MCF 10A (cell line): ENCODE measurements at regions of chr17 and their contacts with region 1.

Region 1: GRCh38 chr17:13393841-13394710 is 207.7 kb downstream of the HS3ST3A1 start:
- DNase-seq: peak; percentile 95
- H3K4me3 Mint-ChIP-seq: no peak overlapping the region
- H3K27ac Mint-ChIP-seq: peak overlapping the region; percentile 65
- H3K4me1 Mint-ChIP-seq: peaks cover 27% of the 10 kb centered on the region
- H3K27me3 Mint-ChIP-seq: no peaks in the 10 kb centered on the region
- CTCF ChIP-seq: no peak

Region 2: GRCh38 chr17:13410874-13411273 is 16.8 kb after region 1 on chr17:
- CTCF ChIA-PET with region 1: interaction called, 4 read pairs
- POLR2A ChIA-PET with region 1: interaction called, 34 read pairs
- intact Hi-C with region 1: no loop called
- DNase-seq: peak; percentile 82
- H3K4me3 Mint-ChIP-seq: peak overlapping the region; percentile 31
- H3K27ac Mint-ChIP-seq: peak overlapping the region; percentile 83
- H3K4me1 Mint-ChIP-seq: peaks cover 27% of the 10 kb centered on the region
- H3K27me3 Mint-ChIP-seq: no peaks in the 10 kb centered on the region
- CTCF ChIP-seq: no peak

Region 3: DNA sequence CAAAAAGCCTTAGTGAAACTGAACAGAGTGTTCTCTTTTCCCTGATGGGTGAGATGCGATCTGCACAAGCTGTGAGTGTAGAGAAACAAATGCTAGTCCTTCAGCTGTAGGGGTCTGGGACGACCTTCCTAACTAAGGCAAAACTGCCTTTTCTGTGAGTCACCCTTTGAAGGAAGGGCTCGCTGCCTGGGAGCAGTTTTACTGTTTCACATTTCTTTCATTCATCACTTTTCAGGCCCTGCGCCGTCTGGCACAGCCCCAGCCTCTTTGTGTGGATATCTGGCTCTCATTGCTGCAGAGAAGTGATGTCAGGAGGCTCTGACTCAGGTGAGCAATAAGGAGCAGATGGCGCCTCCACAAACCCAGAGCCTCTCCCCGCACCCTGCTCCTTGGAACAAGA is 150.2 kb after region 1 on chr17:
- CTCF ChIA-PET with region 1: no interaction called
- POLR2A ChIA-PET with region 1: interaction called, 4 read pairs
- intact Hi-C with region 1: loop called (anchors 10 kb)
- DNase-seq: peak; percentile 94
- H3K4me3 Mint-ChIP-seq: peak overlapping the region; percentile 51
- H3K27ac Mint-ChIP-seq: peak overlapping the region; percentile 67
- H3K4me1 Mint-ChIP-seq: peaks cover 27% of the 10 kb centered on the region
- H3K27me3 Mint-ChIP-seq: no peaks in the 10 kb centered on the region
- CTCF ChIP-seq: no peak